Head of caudate nucleus (tissue), 42 donors: ENCODE measurements at regions of chr19 and their contacts with region 1.

Region 1: GRCh38 chr19:3618144-3618810 is 8.3 kb downstream of the CACTIN start:
- DNase-seq: peak in 41 of 42 donors; percentile 29 to 86 (median 63)

Region 2: GRCh38 chr19:3544742-3545668 is 73.3 kb before region 1 on chr19:
- intact Hi-C with region 1: loop called (anchors 5 kb)
- DNase-seq: peak; percentile 65 to 97 (median 88)

Region 3: DNA sequence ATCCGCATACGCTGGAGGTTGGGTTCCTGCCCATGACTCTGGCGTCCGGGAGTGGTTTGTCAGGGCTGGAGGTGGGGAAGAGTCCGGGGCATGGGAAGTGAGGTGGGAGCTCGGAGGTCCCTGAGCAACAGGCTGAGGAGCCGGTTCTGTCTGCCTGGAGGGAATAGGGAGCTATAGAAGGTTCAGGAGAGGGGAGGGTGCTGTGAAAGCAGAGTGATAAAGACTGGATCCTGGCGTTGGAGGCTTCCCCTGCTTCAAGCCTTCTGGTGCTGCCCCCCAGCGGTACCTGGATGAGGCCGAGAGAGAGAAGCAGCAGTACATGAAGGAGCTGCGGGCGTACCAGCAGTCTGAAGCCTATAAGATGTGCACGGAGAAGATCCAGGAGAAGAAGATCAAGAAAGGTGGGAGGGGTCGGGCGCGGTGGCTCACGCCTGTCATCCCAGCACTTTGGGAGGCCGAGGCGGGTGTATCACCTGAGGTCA is 43.0 kb before region 1 on chr19:
- intact Hi-C with region 1: loop called (anchors 5 kb)
- DNase-seq: peak in 36 of 42 donors; percentile 34 to 77 (median 55)

Region 4: GRCh38 chr19:3586124-3586626 is 32.1 kb before region 1 on chr19:
- intact Hi-C with region 1: no loop called
- DNase-seq: no peak